ENCODE measurements at regions of chr9 and their contacts with region 1.

Region 1: GRCh38 chr9:85716031-85716877 is 25.5 kb downstream of the AGTPBP1 start:
- H3K4me3 Mint-ChIP-seq: peak overlapping the region; percentile 62
- H3K27ac Mint-ChIP-seq: peak overlapping the region; percentile 86
- H3K4me1 Mint-ChIP-seq: peaks cover 60% of the 10 kb centered on the region
- H3K27me3 Mint-ChIP-seq: no peaks in the 10 kb centered on the region

Region 2: GRCh38 chr9:85702726-85703289 is 13.4 kb before region 1 on chr9:
- intact Hi-C with region 1: loop called (anchors 2 kb)
- H3K4me3 Mint-ChIP-seq: no peak overlapping the region
- H3K27ac Mint-ChIP-seq: peak overlapping the region; percentile 37
- H3K4me1 Mint-ChIP-seq: peaks cover 64% of the 10 kb centered on the region
- H3K27me3 Mint-ChIP-seq: no peaks in the 10 kb centered on the region

Region 3: DNA sequence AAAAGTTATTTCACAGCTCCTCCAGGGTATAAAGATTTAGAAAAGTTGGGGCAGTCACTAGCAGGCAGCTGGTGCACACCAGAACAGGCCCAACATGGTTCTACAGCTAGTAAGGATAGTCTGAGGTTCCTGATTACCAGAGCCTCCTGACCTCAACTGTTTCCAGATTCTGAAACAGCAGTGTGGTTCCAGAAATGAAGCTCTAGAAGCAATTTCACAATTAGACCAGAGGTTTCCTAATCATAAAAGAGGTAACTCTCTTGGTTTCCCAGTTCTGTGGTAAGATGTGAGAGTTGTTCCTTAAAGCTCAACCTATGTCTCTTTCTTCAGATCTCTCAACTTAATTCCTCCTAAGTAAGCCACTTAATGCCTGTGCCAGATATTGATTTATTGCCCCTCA is 13.6 kb after region 1 on chr9:
- intact Hi-C with region 1: loop called (anchors 2 kb)
- H3K4me3 Mint-ChIP-seq: no peak overlapping the region
- H3K27ac Mint-ChIP-seq: peak overlapping the region; percentile 80
- H3K4me1 Mint-ChIP-seq: peaks cover 63% of the 10 kb centered on the region
- H3K27me3 Mint-ChIP-seq: no peaks in the 10 kb centered on the region